Left cardiac atrium (tissue), 4 donors: ENCODE measurements at regions of chr15 and their contacts with region 1.

Region 1: GRCh38 chr15:29568838-29569532 is 253.3 kb downstream of the TJP1 start:
- DNase-seq: no peak
- ATAC-seq: peak; percentile 66 to 82

Region 2: DNA sequence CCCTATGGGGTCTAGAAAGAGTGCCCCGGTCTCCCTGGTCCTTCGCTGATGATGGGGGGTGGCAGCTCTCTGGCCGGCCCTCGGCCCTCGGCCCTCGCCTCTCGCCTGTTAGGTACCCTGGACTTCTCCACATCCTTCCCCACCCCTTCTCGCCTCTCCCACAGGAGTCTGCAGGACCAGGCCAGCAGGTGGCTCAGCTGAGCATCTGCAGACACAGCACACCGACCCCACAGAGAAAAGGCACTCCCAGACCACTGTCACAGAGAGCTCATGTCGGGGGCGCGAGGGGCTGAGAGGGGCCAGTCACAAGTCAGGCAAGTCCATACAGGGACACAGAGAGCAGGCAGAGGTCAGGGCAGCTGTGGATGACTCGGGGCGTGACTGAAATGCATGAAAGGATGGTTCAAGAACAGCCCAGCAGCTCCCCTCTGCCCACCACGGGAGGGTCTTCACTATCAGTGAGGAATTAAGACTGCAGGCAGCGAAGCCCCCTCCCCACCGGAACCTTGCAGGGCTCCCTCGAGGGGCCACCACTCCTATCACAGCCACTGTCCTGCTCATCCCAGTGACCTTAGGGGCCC is 117.7 kb before region 1 on chr15:
- intact Hi-C with region 1: loop called in 1 of 2 experiments (anchors 5 kb)
- DNase-seq: peak; percentile 31
- ATAC-seq: peak; percentile 69 to 71

Region 3: GRCh38 chr15:29470311-29471193 is 98.4 kb before region 1 on chr15:
- intact Hi-C with region 1: loop called in 1 of 2 experiments (anchors 10 kb)
- DNase-seq: no peak
- ATAC-seq: peak; percentile 34 to 84

Region 4: DNA sequence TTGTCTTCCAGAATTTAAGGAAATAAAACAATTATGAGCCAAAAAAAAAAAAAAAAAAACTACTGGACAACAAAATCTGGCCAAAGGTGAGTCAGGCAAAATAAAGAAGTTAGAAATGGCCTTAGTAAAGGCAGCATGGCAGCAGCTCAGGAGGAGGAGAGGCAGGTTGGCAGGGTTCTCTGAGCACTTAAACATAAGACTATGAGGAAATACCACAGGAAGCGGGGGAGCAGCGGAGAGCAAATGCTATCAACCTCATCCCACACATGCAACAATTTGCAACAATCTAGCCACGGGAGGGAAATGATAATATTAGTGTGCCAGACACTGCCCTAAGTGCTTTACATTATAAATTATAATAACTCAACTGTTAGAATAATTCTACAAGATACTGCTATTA is 52.1 kb before region 1 on chr15:
- intact Hi-C with region 1: no loop called
- DNase-seq: no peak
- ATAC-seq: peak; percentile 19 to 90